Posterior cingulate gyrus (tissue), 11 donors: ENCODE measurements at regions of chr6 and their contacts with region 1.

Region 1: GRCh38 chr6:164927288-164928056 is 381.9 kb downstream of the C6orf118 start:
- DNase-seq: peak; percentile 82 to 98 (median 86)

Region 2: GRCh38 chr6:163565140-163565539 is 1362.3 kb before region 1 on chr6:
- intact Hi-C with region 1: loop called (anchors 10 kb)
- DNase-seq: no peak

Region 3: DNA sequence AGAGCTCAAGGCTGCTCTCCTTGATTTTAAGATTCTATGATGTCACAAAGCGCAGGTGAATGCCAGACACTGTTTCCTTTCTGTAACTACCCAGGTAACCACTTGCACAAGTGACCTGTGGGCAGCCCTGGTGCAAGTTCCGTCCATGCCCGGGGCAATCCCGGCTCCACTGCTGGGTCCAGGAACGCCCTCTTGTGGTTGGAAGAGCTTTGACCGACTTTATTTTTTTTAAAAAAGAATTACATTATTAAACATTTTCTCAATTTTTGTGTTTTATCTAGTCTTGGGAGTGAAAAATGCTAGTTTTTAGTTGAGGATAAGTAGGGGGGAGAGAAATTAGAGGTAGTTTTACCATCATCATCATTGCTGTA is 817.7 kb before region 1 on chr6:
- intact Hi-C with region 1: loop called (anchors 10 kb)
- DNase-seq: peak in 1 of 10 donors; percentile 87

Region 4: DNA sequence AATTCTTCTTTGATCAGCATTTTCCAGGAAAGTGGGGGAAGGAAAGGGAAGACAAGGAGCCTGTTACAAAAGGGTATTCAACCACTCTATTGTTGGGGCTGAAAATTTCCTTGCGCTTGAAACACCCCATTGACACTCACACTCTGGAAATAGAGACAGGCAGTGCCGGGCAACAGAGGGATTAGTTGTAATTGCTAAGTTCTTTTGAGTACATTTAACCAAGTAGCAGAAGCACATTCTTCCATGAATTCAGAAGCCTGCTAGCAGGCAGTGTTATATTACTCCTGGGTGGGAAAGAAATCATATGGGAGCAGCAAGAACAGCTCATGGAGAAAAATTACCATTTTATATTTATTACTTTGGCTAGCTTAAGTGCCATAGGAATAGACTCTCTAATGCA is 363.5 kb before region 1 on chr6:
- intact Hi-C with region 1: loop called (anchors 10 kb)
- DNase-seq: peak in 4 of 10 donors; percentile 2 to 11 (median 10)

Region 5: GRCh38 chr6:165231581-165232561 is 304.4 kb after region 1 on chr6:
- intact Hi-C with region 1: loop called (anchors 1 kb)
- DNase-seq: peak in 7 of 10 donors; percentile 37 to 84 (median 49)